ENCODE measurements at regions of chr7 and their contacts with region 1.

Region 1: GRCh38 chr7:77378584-77378983 is 37.6 kb downstream of the GSAP start:
- DNase-seq: no peak
- ATAC-seq: no peak
- H3K4me3 ChIP-seq: no peak overlapping the region
- H3K27ac ChIP-seq: no peak overlapping the region
- H3K4me1 ChIP-seq: no peaks in the 10 kb centered on the region
- H3K27me3 ChIP-seq: peaks cover 17% of the 10 kb centered on the region
- CTCF ChIP-seq: no peak

Region 2: DNA sequence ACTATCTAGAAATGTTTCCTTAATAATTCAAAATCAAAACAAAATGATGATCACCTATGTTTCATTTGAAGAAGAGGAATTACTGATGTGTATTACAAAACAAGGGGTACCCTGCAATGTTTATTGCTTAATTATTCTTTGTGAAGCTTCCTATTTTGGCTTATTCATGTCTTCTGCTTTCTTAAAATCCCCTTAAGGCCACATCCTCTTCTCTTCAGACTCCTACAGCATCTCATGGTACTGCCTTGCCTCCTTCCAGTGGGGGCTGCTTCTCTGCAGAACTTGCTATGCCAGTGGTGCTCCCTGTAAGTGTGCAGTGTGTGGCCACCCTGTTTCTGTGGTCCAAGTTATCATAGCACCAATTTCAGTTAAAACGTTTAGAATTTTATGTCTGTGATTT is 221.1 kb before region 1 on chr7:
- CTCF ChIA-PET with region 1: no interaction called
- POLR2A ChIA-PET with region 1: no interaction called
- in situ Hi-C with region 1: no loop called
- intact Hi-C with region 1: no loop called
- DNase-seq: no peak
- ATAC-seq: 0 out of 2 replicates have a peak, but pooled peaks have one; percentile 53
- H3K4me3 ChIP-seq: no peak overlapping the region
- H3K27ac ChIP-seq: no peak overlapping the region
- H3K4me1 ChIP-seq: no peaks in the 10 kb centered on the region; the same call in 1 of the 2 replicates
- H3K27me3 ChIP-seq: no peaks in the 10 kb centered on the region
- CTCF ChIP-seq: no peak

Region 3: DNA sequence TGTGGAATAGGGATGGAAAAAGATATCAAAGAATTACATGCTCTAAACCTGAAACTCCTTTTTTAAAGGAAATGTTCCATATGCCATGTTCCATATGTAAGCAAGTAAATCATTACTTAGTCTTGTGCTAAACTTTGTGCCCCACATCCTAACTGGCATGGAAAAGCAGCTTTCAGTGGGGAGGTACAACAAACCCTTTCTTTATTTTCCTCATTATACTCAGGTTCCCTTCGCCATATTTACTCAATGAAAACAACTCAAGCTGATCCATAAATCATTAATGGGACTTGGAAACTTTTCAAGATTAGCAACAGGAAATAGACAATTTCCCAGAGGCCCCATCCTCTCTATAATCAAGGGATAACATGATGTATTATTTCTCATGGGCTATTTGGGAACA is 18.5 kb before region 1 on chr7:
- CTCF ChIA-PET with region 1: no interaction called
- POLR2A ChIA-PET with region 1: interaction called, 19 read pairs
- in situ Hi-C with region 1: no loop called
- intact Hi-C with region 1: no loop called
- DNase-seq: no peak
- ATAC-seq: no peak
- H3K4me3 ChIP-seq: no peak overlapping the region
- H3K27ac ChIP-seq: no peak overlapping the region
- H3K4me1 ChIP-seq: no peaks in the 10 kb centered on the region
- H3K27me3 ChIP-seq: peaks cover 22% of the 10 kb centered on the region
- CTCF ChIP-seq: no peak